ENCODE measurements at regions of chr14 and their contacts with region 1.

Region 1: GRCh38 chr14:67426983-67427606 is 15.1 kb upstream of the PLEK2 start:
- DNase-seq: peak; percentile 74
- H3K4me3 ChIP-seq: no peak overlapping the region
- H3K27ac ChIP-seq: no peak overlapping the region
- H3K4me1 ChIP-seq: no peaks in the 10 kb centered on the region
- H3K27me3 ChIP-seq: no peaks in the 10 kb centered on the region
- CTCF ChIP-seq: peak; percentile 64 to 89 (median 80)
- POLR2A ChIP-seq: no peak

Region 2: GRCh38 chr14:67514650-67515385 is 87.7 kb after region 1 on chr14:
- intact Hi-C with region 1: loop called (anchors 2 kb)
- DNase-seq: no peak
- H3K4me3 ChIP-seq: peak overlapping the region; percentile 91 to 94
- H3K27ac ChIP-seq: peak overlapping the region; percentile 71 to 79
- H3K4me1 ChIP-seq: no peaks in the 10 kb centered on the region
- H3K27me3 ChIP-seq: no peaks in the 10 kb centered on the region
- CTCF ChIP-seq: no peak
- POLR2A ChIP-seq: no peak

Region 3: GRCh38 chr14:67571272-67571850 is 144.3 kb after region 1 on chr14:
- intact Hi-C with region 1: loop called (anchors 1 kb)
- DNase-seq: peak; percentile 64
- H3K4me3 ChIP-seq: no peak overlapping the region
- H3K27ac ChIP-seq: no peak overlapping the region
- H3K4me1 ChIP-seq: no peaks in the 10 kb centered on the region
- H3K27me3 ChIP-seq: no peaks in the 10 kb centered on the region
- CTCF ChIP-seq: peak; percentile 71 to 87 (median 84)
- POLR2A ChIP-seq: no peak